AG04449 (cell line): ENCODE measurements at regions of chr1 and their contacts with region 1.

Region 1: GRCh38 chr1:26391450-26391849 is 18.9 kb upstream of the ZNF683 start:
- DNase-seq: no peak
- H3K4me3 ChIP-seq: no peak overlapping the region
- CTCF ChIP-seq: peak; percentile 76

Region 2: DNA sequence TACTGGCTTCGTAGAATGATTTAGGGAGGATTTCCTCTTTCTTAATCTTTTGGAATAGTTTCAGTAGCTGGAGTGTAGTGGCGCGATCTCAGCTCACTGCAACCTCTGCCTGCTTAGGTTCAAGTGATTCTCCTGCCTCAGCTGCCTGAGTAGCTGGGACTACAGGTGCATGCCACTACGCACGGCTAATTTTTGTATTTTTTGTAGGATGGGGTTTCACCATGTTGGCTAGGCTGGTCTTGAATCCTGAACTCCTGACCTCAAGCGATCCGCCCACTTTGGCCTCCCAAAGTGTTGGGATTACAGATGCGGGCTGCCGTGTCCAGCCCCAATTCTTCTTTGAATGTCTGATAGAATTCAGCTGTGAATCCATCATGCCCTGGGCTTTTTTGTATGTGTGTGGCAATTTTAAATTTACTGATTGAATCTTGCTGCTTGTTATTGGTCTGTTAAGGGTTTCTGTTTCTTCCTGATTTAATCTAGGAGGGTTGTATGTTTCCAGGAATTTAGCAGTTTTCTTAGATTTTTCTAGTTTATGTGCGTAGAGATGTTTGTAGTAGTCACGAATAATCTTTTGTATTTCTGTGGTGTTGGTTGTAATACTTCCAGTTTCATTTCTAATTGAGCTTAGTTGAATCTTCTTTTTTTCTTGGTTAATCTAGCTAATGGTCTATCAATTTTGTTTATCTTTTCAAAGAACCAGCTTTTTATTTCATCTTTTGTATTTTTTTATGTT is 759.5 kb before region 1 on chr1:
- CTCF ChIA-PET with region 1: no interaction called
- POLR2A ChIA-PET with region 1: no interaction called
- DNase-seq: no peak
- H3K4me3 ChIP-seq: no peak overlapping the region
- CTCF ChIP-seq: no peak

Region 3: DNA sequence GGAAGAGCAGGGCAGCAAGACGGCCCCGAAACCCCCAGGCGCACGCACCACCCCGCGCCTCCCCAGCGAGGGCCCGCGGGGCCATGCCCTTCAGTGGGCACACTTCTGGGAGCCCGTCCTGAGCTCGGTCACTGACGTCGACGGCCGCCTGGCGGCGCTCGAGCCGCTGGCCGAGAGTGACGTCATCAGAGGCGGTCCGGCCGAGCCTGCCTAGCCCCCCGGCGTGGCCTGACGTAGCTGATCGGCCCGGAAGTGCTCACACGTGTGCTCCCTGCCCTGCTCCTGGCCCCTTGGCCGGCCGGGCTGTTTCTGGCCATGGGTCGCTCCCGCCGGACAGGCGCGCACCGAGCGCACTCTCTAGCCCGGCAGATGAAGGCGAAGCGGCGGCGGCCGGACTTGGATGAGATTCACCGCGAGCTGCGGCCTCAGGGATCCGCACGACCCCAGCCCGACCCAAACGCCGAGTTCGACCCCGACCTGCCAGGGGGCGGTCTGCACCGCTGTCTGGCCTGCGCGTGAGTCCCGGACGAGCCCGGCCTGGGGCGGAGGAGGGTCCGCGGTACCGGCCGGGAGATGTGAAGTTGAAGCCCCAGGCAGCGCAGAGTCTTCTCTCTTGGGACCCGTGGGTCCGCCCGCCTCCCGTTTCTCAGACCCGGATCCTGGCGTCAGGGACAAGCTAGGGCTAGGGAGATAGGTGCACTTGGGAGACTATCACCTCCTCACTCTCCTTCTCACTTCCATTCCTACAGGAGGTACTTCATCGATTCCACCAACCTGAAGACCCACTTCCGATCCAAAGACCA is 221.6 kb before region 1 on chr1 and contains the start of gene ZNF593:
- CTCF ChIA-PET with region 1: interaction called, 14 read pairs
- POLR2A ChIA-PET with region 1: no interaction called
- DNase-seq: peak; percentile 19
- H3K4me3 ChIP-seq: peak within 1 kb of the TSS; percentile 93
- CTCF ChIP-seq: peak; percentile 100

Region 4: GRCh38 chr1:26279456-26280332 is 111.8 kb before region 1 on chr1 and contains the start of gene SH3BGRL3:
- CTCF ChIA-PET with region 1: interaction called, 32 read pairs
- POLR2A ChIA-PET with region 1: no interaction called
- DNase-seq: no peak
- H3K4me3 ChIP-seq: peak within 1 kb of the TSS; percentile 81
- CTCF ChIP-seq: peak; percentile 75

Region 5: GRCh38 chr1:26284597-26285360 is 106.7 kb before region 1 on chr1:
- CTCF ChIA-PET with region 1: interaction called, 32 read pairs
- POLR2A ChIA-PET with region 1: no interaction called
- DNase-seq: peak; percentile 69
- H3K4me3 ChIP-seq: no peak overlapping the region; the same call in 1 of the 2 replicates
- CTCF ChIP-seq: peak; percentile 85

Region 6: GRCh38 chr1:26378088-26378878 is 13.2 kb before region 1 on chr1:
- CTCF ChIA-PET with region 1: interaction called, 21 read pairs
- POLR2A ChIA-PET with region 1: no interaction called
- DNase-seq: peak; percentile 92
- H3K4me3 ChIP-seq: peak overlapping the region; percentile 34
- CTCF ChIP-seq: no peak

Region 7: GRCh38 chr1:26429721-26430120 is 38.3 kb after region 1 on chr1:
- CTCF ChIA-PET with region 1: no interaction called
- POLR2A ChIA-PET with region 1: no interaction called
- DNase-seq: no peak
- H3K4me3 ChIP-seq: no peak overlapping the region
- CTCF ChIP-seq: no peak